Endothelial cell of umbilical vein (primary cell): ENCODE measurements at regions of chr4 and their contacts with region 1.

Region 1: GRCh38 chr4:84852081-84852480 is 114.4 kb downstream of the WDFY3 start:
- DNase-seq: peak; percentile 92
- H3K4me3 ChIP-seq: peak overlapping the region in 1 of 3 experiments; percentile 12
- H3K27ac ChIP-seq: peak overlapping the region; percentile 51
- H3K4me1 ChIP-seq: peaks cover 12% of the 10 kb centered on the region
- H3K27me3 ChIP-seq: no peaks in the 10 kb centered on the region
- CTCF ChIP-seq: no peak
- POLR2A ChIP-seq: no peak

Region 2: DNA sequence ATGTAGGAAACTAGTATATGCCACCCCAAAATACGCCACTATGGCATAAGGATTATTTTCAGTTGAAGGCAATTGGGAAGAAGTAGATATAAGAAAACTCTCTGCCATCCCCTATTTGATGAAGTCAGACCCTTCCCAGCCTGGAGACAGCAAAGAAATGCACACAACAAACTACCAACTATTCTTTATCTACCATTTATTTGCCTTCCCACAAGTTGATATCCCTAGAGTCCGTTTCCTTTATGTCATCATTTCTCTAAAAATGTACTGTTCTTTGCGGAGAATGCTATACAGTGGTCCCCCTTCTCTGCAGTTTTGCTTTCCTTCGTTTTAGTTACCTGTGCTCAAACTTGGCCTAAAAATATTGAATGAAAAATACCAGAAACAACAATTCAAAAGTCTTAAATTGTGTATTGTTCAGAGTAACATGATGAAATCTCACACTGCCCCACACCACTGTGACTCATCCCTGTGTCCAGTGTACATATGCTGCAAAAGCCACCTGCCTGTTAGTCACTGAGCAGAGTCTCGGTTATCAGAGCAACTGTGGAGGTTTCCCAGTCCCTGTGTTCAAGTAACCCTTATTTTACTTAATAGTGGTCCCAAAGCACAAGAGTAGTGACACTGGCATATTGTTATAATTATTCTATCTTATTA is 37.9 kb before region 1 on chr4:
- CTCF ChIA-PET with region 1: no interaction called
- POLR2A ChIA-PET with region 1: no interaction called
- dilution Hi-C with region 1: no loop called
- intact Hi-C with region 1: loop called (anchors 5 kb)
- DNase-seq: peak; percentile 87
- H3K4me3 ChIP-seq: no peak overlapping the region
- H3K27ac ChIP-seq: peak overlapping the region; percentile 18
- H3K4me1 ChIP-seq: peaks cover 14% of the 10 kb centered on the region
- H3K27me3 ChIP-seq: no peaks in the 10 kb centered on the region
- CTCF ChIP-seq: no peak
- POLR2A ChIP-seq: no peak